OCI-LY7 (cell line): ENCODE measurements at regions of chr19 and their contacts with region 1.

Region 1: GRCh38 chr19:13774217-13775191 is at the start of gene C19orf53:
- DNase-seq: peak; percentile 90
- H3K4me3 ChIP-seq: peak within 1 kb of the TSS; percentile 99
- H3K27ac ChIP-seq: peak within 1 kb of the TSS; percentile 51
- H3K4me1 ChIP-seq: peaks cover 11% of the 10 kb centered on the region
- CTCF ChIP-seq: no peak
- total RNA-seq, gene C19orf53: 162 and 177 TPM in 2 replicates

Region 2: GRCh38 chr19:13748169-13748828 is 26.2 kb before region 1 on chr19:
- CTCF ChIA-PET with region 1: no interaction called
- POLR2A ChIA-PET with region 1: interaction called, 10 read pairs
- intact Hi-C with region 1: no loop called
- DNase-seq: peak; percentile 21
- H3K4me3 ChIP-seq: peak overlapping the region; percentile 88
- H3K27ac ChIP-seq: peak overlapping the region; percentile 29
- H3K4me1 ChIP-seq: peaks cover 10% of the 10 kb centered on the region
- CTCF ChIP-seq: no peak

Region 3: DNA sequence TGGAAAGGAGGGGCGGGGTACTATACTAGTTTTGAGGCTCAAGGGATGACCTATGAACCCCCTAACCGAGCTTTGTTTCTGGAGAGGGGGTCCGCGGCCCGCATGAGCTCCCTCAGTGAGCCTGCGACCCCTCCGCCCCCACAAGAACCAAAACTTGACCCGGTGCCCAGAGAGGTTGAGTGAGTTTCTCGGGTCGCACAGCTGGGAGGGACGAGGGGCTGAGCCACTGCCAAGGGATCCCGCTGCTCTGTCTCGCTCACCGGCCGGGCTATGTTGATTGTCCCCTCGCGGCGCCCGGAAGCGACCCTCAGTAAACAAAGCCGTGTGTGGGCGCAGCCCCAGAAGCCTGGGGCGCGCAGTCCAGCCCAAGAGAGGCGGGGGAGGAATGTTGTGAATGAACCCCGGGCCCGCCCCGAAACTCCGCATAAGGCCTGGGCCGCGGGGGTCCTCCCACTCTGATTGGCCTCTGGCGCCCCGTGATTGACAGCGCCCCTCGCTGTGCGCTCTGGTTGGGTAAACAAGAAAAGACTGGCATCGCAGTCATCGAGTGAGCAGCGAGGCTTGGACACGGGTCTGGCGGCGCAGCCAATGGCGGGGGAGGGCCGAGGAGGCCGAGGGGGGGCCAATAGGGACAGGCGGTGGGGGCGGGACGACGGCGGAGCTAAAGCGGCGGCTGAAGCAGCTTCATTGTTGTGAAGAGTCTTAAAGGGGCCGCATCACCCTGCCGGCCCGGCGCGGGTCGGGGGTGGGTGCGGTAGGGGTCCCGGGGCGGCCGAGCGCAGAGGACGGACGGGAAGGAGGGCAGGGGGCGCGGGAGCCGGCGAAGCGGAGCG is 20.5 kb after region 1 on chr19 and contains the start of gene ZSWIM4:
- CTCF ChIA-PET with region 1: no interaction called
- POLR2A ChIA-PET with region 1: no interaction called
- intact Hi-C with region 1: no loop called
- DNase-seq: peak; percentile 99
- H3K4me3 ChIP-seq: peak within 1 kb of the TSS; percentile 79
- H3K27ac ChIP-seq: peak within 1 kb of the TSS; percentile 26
- H3K4me1 ChIP-seq: peaks cover 35% of the 10 kb centered on the region
- CTCF ChIP-seq: no peak
- total RNA-seq, gene ZSWIM4: 3.7 and 5.0 TPM in 2 replicates